Common myeloid progenitor, CD34-positive (primary cell): ENCODE measurements at regions of chr16 and their contacts with region 1.

Region 1: GRCh38 chr16:56600398-56600999 is 7.9 kb upstream of the MT2A start:
- DNase-seq: peak; percentile 57 to 80 (median 70)
- H3K4me3 ChIP-seq: no peak overlapping the region
- H3K27ac ChIP-seq: no peak overlapping the region
- H3K4me1 ChIP-seq: no peaks in the 10 kb centered on the region
- H3K27me3 ChIP-seq: peaks cover 0 to 13% (median 6%) of the 10 kb centered on the region in 5 experiments

Region 2: DNA sequence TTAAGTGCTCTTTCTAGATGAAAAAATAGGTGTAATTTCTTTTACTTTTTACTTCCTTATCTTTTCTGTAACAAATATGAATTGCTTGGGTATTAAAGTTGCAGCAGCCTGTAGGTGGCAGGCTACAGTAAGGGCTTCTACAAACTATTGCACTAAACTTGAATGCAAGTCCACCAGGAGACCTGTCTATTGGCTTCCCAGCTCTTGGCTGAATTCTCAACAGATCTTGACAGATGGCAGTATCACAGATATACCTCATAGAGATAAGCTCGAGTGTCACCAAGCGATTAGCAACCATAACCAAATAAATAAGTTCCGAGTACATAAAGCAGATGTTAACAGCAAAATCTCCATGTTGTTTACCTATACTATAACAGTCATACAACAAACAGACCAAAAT is 86.5 kb before region 1 on chr16:
- CTCF ChIA-PET with region 1: interaction called, 11 read pairs
- POLR2A ChIA-PET with region 1: no interaction called
- DNase-seq: peak; percentile 80 to 85 (median 84)
- H3K4me3 ChIP-seq: no peak overlapping the region
- H3K27ac ChIP-seq: no peak overlapping the region
- H3K4me1 ChIP-seq: peaks cover 0 to 9% (median 2%) of the 10 kb centered on the region in 4 experiments
- H3K27me3 ChIP-seq: no peaks in the 10 kb centered on the region

Region 3: DNA sequence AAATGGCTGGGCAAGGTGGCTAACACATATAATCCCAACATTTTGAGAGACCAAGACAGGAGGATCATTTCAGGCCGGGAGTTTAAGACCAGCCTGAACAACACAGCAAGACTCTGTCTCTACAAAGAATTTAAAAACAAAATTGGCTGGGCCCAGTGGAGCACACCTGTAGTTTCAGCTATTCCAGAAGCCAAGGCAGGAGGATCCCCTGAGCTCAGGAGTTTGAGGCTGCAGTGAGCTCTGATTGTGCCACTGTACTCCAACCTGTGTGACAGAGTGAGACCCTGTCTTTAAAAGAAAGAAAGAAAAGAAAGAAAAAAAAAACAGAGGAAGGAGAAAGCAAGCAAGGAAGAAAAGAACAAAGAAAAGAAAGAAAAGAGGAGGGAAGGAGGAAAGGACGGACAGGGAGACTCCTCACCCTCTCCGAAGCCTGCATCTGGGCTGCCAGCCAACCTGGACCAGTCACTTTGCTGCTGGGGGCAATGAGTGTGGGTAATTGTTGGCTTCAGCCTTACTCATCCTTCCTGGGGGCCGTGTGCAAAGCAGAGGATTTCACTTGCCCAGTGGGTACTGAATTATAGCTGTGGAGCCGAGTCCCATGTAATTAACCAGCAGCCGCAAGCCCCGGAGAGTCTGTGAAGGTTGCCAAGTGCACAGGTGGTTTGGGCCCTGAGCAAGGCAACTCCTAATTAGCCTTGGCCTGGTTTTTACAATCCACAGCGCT is 42.3 kb before region 1 on chr16:
- CTCF ChIA-PET with region 1: no interaction called
- POLR2A ChIA-PET with region 1: no interaction called
- DNase-seq: no peak
- H3K4me3 ChIP-seq: no peak overlapping the region
- H3K27ac ChIP-seq: no peak overlapping the region
- H3K4me1 ChIP-seq: no peaks in the 10 kb centered on the region
- H3K27me3 ChIP-seq: peaks cover 0 to 11% (median 0%) of the 10 kb centered on the region in 5 experiments

Region 4: GRCh38 chr16:56576585-56577293 is 23.8 kb before region 1 on chr16:
- CTCF ChIA-PET with region 1: interaction called, 53 read pairs
- POLR2A ChIA-PET with region 1: no interaction called
- DNase-seq: peak; percentile 74 to 83 (median 81)
- H3K4me3 ChIP-seq: no peak overlapping the region
- H3K27ac ChIP-seq: no peak overlapping the region
- H3K4me1 ChIP-seq: peaks cover 0 to 3% (median 1%) of the 10 kb centered on the region in 4 experiments
- H3K27me3 ChIP-seq: peaks cover 0 to 2% (median 0%) of the 10 kb centered on the region in 5 experiments

Region 5: DNA sequence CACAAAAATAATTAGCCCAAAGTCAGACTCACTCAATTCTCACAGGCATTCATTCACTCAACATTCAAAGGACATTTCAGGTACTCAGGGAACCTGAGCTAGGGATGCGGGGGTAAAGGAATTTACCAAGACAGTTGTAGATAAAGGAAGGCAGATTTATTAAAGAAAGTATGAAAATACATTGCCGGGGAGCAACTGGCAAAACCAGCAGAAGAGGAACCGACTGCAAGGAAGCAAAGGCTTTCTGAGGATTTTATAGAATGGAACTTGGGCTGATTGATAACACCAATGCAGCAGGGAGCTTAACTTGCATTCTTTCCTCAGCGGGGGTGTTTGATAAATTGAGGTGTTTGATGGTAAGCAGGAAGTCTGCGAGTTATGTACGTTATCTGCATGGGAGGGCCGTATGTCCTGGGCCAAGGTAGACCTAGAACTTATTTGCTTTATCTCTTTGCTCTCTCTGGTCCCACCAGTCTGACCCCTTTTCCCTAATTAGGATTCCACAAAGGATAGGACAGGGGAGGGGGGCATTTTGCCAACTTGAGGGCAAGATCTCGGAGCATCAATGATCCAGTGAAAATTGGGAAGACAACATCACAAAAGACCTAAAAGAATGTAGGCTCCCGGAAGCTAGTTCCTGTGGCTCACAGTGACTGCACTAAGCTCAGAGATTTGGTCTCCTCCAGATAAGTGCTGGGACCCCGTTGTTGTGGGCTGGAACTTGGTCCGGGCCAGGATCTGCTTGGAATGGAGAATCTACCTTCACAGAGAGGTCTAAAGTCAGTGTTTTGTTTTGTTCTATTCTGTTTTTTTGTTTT is 16.9 kb before region 1 on chr16:
- CTCF ChIA-PET with region 1: interaction called, 53 read pairs
- POLR2A ChIA-PET with region 1: no interaction called
- DNase-seq: no peak
- H3K4me3 ChIP-seq: no peak overlapping the region
- H3K27ac ChIP-seq: no peak overlapping the region
- H3K4me1 ChIP-seq: peaks cover 0 to 11% (median 3%) of the 10 kb centered on the region in 4 experiments
- H3K27me3 ChIP-seq: peaks cover 2 to 24% (median 13%) of the 10 kb centered on the region in 5 experiments

Region 6: GRCh38 chr16:56589141-56590039 is 11.1 kb before region 1 on chr16 and contains the start of gene MT3:
- CTCF ChIA-PET with region 1: interaction called, 29 read pairs
- POLR2A ChIA-PET with region 1: no interaction called
- DNase-seq: peak in 2 of 3 donors; percentile 60 to 70
- H3K4me3 ChIP-seq: peak within 1 kb of the TSS in 6 of 7 experiments; percentile 33 to 75 (median 60)
- H3K27ac ChIP-seq: no peak within 1 kb of the TSS
- H3K4me1 ChIP-seq: peaks cover 0 to 21% (median 19%) of the 10 kb centered on the region in 4 experiments
- H3K27me3 ChIP-seq: peaks cover 3 to 43% (median 23%) of the 10 kb centered on the region in 5 experiments